Mammary epithelial cell (primary cell): ENCODE measurements at regions of chr11 and their contacts with region 1.

Region 1: GRCh38 chr11:17846852-17847453 is 112.4 kb downstream of the KCNC1 start:
- DNase-seq: peak; percentile 31
- H3K4me3 ChIP-seq: no peak overlapping the region
- H3K27ac ChIP-seq: no peak overlapping the region
- H3K4me1 ChIP-seq: peaks cover 18% of the 10 kb centered on the region
- H3K27me3 ChIP-seq: no peaks in the 10 kb centered on the region
- CTCF ChIP-seq: peak; percentile 28 to 51

Region 2: DNA sequence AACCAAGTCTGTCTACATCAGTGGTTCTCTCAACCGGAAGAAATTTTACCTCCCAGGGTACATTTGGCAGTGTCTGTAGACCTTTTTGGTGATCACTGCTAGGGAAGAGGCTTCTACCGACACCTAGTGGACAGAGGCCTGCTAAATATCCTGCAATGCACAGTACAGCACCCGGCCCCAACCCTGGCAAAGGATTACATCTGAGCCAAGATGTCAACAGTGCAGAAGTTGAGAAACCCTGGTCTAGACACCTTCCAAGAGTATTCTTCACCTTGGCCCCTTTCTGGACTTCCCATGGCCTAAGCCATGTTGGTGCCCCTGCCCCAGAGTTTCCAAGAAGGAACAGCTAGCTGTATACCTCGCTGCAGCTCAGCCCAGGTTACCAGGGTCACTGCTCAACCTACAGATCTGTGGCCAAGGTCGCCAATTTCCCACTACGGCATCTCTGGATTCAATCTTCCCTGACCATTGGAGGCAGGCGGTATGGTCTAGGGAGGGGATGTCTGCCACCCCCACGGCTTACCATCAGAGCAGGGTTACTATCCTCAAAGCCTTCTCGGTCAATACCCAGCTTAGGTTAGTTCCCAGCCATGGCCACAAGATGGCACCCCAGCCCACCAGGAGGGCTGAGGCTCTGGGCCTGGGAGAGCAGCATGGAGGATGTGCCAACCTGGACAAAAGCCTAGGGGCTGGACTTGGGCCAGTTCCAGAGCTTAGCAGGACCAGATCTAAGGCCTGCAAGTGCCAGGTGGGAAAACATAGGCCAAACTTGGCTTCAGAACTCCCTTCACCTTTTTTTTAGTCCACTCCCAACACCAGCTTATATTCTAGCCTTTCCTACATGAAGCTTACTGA is 116.1 kb before region 1 on chr11:
- CTCF ChIA-PET with region 1: no interaction called
- dilution Hi-C with region 1: no loop called
- in situ Hi-C with region 1: no loop called
- intact Hi-C with region 1: loop called (anchors 1 kb)
- DNase-seq: peak; percentile 68
- H3K4me3 ChIP-seq: no peak overlapping the region
- H3K27ac ChIP-seq: no peak overlapping the region
- H3K4me1 ChIP-seq: peaks cover 9% of the 10 kb centered on the region
- H3K27me3 ChIP-seq: peaks cover 12% of the 10 kb centered on the region
- CTCF ChIP-seq: peak; percentile 82 to 96

Region 3: GRCh38 chr11:17770048-17770652 is 76.8 kb before region 1 on chr11:
- CTCF ChIA-PET with region 1: interaction called, 12 read pairs
- dilution Hi-C with region 1: no loop called
- in situ Hi-C with region 1: no loop called
- intact Hi-C with region 1: loop called (anchors 2 kb)
- DNase-seq: no peak
- H3K4me3 ChIP-seq: no peak overlapping the region
- H3K27ac ChIP-seq: no peak overlapping the region
- H3K4me1 ChIP-seq: peaks cover 4% of the 10 kb centered on the region
- H3K27me3 ChIP-seq: no peaks in the 10 kb centered on the region
- CTCF ChIP-seq: peak; percentile 3 to 18